Upper lobe of right lung (tissue), 1 donor: ENCODE measurements at regions of chr6 and their contacts with region 1.

Region 1: DNA sequence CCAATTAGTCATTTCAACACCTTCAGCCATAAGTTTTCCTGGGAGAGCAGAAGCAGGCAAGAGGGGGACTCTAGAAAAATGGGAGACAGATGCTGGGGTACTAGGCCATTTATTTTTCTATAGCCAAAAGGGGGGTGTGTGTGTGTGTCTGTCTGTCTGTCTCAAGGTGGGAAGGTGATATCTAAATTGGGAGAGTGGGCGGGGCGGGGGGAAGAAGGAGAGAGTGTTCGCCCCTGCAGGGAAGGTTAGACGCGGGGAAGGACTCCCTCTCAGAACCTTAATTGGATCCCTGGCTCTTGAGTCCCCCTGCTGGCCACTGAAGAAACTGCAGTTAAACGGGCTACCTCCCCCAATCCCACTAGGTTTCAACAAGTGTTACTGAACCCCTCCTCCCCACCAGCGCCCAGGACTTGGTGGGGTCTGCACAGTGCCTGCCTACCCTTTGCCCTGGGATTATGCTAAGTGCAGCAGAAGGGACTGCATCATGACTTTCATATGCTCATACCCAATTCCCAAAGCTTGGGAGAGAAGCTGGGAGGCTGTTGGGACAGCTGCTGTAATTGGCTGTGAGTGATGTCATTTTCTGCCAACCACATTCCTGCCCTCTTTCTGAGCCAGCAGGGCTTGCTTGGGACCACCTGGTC is 45.8 kb downstream of the FOXP4 start:
- DNase-seq: peak; percentile 78
- ATAC-seq: peak; percentile 80
- H3K4me3 ChIP-seq: no peak overlapping the region
- H3K27ac ChIP-seq: no peak overlapping the region
- H3K4me1 ChIP-seq: no peaks in the 10 kb centered on the region
- H3K27me3 ChIP-seq: no peaks in the 10 kb centered on the region
- CTCF ChIP-seq: peak; percentile 94

Region 2: DNA sequence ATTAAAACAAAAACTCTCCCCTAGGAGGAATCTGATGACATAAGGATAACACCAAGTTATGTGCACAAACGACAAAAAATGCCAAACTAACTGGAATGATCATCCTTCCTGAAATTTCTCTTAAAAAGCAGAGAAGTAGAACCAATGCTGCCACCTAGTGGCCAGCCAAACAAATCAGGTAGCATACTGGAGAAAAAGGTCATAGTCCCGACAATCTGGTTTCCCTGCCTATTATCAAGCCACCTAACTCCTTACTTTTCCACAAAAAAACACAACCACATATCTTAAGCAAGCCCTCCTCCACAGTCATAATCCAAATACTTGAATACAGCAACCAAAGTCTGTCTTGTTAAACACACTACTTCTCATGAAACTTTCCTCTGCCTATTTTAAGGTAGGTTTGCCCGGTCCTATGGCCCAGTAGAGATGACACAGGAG is 525.1 kb before region 1 on chr6:
- intact Hi-C with region 1: no loop called
- DNase-seq: no peak
- ATAC-seq: peak; percentile 54
- H3K4me3 ChIP-seq: no peak overlapping the region
- H3K27ac ChIP-seq: no peak overlapping the region
- H3K4me1 ChIP-seq: peaks cover 8% of the 10 kb centered on the region
- H3K27me3 ChIP-seq: no peaks in the 10 kb centered on the region
- CTCF ChIP-seq: peak; percentile 89

Region 3: GRCh38 chr6:41424370-41425058 is 167.5 kb before region 1 on chr6:
- intact Hi-C with region 1: loop called (anchors 10 kb)
- DNase-seq: no peak
- ATAC-seq: peak; percentile 73
- H3K4me3 ChIP-seq: no peak overlapping the region
- H3K27ac ChIP-seq: no peak overlapping the region
- H3K4me1 ChIP-seq: peaks cover 24% of the 10 kb centered on the region
- H3K27me3 ChIP-seq: peaks cover 16% of the 10 kb centered on the region
- CTCF ChIP-seq: peak; percentile 87

Region 4: DNA sequence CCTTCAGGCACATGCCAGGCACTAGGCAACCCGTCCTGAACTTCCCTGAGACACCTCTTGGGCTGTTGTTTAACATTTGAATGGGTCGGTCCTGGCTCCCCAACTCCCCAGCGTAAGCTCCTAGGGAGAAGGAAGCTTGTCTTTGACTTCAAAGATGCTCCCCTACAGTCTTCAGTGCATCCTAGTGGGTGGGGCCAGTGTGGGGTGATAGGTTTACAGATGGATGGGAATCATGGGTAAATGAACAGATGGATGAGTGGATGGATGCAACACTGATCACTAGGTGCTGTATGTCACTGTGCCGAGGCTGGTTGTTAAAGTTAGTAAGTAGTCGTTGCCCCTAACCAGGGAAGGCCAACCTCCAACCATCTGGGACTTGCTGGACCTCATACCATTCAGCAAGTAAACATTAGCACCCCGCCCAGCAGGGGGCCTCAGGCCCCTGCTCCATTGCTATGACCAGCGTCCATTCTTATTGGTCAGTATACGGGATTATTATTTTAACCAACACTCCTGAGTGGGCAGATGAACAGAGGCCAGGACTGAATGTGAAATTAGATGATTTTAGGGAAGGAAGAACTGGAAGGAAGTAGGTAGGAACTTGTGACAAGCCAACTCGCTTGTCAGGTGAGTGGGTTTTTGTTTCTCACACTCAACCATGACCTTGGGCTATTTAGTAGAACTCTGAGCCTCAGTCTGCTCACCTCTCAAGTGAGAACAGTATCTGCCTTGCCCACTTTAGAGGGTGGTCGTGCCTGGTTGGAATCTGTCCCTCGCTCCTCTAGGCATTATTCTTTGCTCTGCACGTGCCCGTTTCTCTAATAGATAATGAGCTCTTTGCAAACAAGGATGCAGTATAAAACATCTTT is 128.7 kb before region 1 on chr6:
- intact Hi-C with region 1: loop called (anchors 10 kb)
- DNase-seq: peak; percentile 88
- ATAC-seq: peak; percentile 93
- H3K4me3 ChIP-seq: no peak overlapping the region
- H3K27ac ChIP-seq: no peak overlapping the region
- H3K4me1 ChIP-seq: no peaks in the 10 kb centered on the region
- H3K27me3 ChIP-seq: no peaks in the 10 kb centered on the region
- CTCF ChIP-seq: peak; percentile 70